Activated CD8-positive, alpha-beta T cell treated with anti-CD3 and anti-CD28 coated beads for 36 hours (primary cell): ENCODE measurements at regions of chr4 and their contacts with region 1.

Region 1: DNA sequence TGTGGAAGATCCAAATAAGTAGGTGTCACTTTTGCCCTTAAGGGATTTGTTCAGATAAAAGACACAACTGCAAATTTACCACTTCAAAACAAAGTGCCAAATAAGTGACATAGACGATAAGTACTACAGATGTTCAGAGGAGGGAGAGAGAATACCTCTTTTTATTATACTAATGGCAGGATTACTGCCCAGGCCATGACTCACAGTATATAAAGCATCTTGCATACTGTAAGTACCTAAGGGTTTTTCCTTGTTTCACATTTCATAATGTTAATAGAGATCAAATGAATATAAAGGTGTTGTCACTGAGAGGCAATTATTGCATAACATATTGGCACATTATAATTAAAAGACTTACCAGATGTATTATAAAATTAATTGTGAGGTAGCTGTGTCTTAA is 46.4 kb downstream of the PTPN13 start:
- DNase-seq: no peak
- ATAC-seq: no peak
- H3K4me3 Mint-ChIP-seq: no peak overlapping the region
- H3K27ac Mint-ChIP-seq: no peak overlapping the region
- H3K4me1 Mint-ChIP-seq: no peaks in the 10 kb centered on the region
- H3K27me3 Mint-ChIP-seq: no peaks in the 10 kb centered on the region
- CTCF ChIP-seq: no peak

Region 2: GRCh38 chr4:86895692-86896488 is 255.4 kb after region 1 on chr4:
- CTCF ChIA-PET with region 1: no interaction called
- POLR2A ChIA-PET with region 1: no interaction called
- intact Hi-C with region 1: loop called (anchors 10 kb)
- DNase-seq: no peak
- ATAC-seq: peak; percentile 52
- H3K4me3 Mint-ChIP-seq: no peak overlapping the region
- H3K27ac Mint-ChIP-seq: no peak overlapping the region
- H3K4me1 Mint-ChIP-seq: peaks cover 8% of the 10 kb centered on the region
- H3K27me3 Mint-ChIP-seq: peaks cover 17% of the 10 kb centered on the region
- CTCF ChIP-seq: peak; percentile 77